ENCODE measurements at regions of chr7 and their contacts with region 1.

Region 1: DNA sequence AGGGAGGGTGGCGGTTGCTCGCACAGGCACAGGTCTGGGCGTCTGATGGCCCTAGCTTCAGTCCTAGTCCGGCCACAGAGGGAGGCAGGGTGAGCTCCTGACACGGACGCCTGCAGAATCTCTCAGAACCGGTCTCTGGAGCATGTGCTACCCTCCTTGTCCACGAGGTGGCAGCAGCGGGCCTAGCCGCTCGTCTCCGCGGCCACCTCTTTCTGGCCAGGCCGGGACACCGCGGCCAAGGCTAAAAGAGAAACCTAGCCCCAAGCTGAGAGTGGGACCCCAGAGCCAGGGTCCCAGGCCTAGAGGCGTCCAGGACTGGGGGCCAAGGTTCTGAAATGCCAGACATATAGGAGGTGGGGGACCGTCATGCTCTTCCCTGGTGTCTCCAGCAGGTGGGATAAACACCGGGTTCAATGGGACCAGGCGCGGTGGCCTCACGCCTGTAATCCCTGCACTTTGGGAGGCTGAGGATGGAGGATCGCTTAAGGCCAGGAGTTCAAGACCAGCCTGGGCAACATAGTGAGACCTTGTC is 3.2 kb upstream of the LAT2 start:
- DNase-seq: peak; percentile 61 to 87 (median 74)
- ATAC-seq: peak; percentile 77
- H3K4me3 ChIP-seq: peak overlapping the region; percentile 30
- H3K4me3 Mint-ChIP-seq: no peak overlapping the region
- H3K27ac ChIP-seq: no peak overlapping the region
- H3K27ac Mint-ChIP-seq: no peak overlapping the region
- H3K4me1 ChIP-seq: peaks cover 34% of the 10 kb centered on the region
- H3K4me1 Mint-ChIP-seq: peaks cover 13% of the 10 kb centered on the region
- H3K27me3 ChIP-seq: no peaks in the 10 kb centered on the region
- H3K27me3 Mint-ChIP-seq: peaks cover 5% of the 10 kb centered on the region
- CTCF ChIP-seq: peak; percentile 96

Region 2: GRCh38 chr7:72307566-72307965 is 1899.1 kb before region 1 on chr7:
- CTCF ChIA-PET with region 1: no interaction called
- POLR2A ChIA-PET with region 1: no interaction called
- intact Hi-C with region 1: no loop called
- DNase-seq: no peak
- ATAC-seq: no peak
- H3K4me3 ChIP-seq: no peak overlapping the region
- H3K4me3 Mint-ChIP-seq: no peak overlapping the region
- H3K27ac ChIP-seq: no peak overlapping the region
- H3K27ac Mint-ChIP-seq: no peak overlapping the region
- H3K4me1 ChIP-seq: no peaks in the 10 kb centered on the region
- H3K4me1 Mint-ChIP-seq: no peaks in the 10 kb centered on the region
- H3K27me3 ChIP-seq: no peaks in the 10 kb centered on the region
- H3K27me3 Mint-ChIP-seq: no peaks in the 10 kb centered on the region
- CTCF ChIP-seq: no peak

Region 3: GRCh38 chr7:74272305-74273038 is 65.8 kb after region 1 on chr7:
- CTCF ChIA-PET with region 1: interaction called, 3 read pairs
- POLR2A ChIA-PET with region 1: no interaction called
- intact Hi-C with region 1: loop called in 1 of 2 experiments (anchors 10 kb)
- DNase-seq: peak in 3 of 14 experiments; percentile 21 to 61 (median 59)
- ATAC-seq: no peak
- H3K4me3 ChIP-seq: no peak overlapping the region
- H3K4me3 Mint-ChIP-seq: peak overlapping the region; percentile 20
- H3K27ac ChIP-seq: no peak overlapping the region
- H3K27ac Mint-ChIP-seq: no peak overlapping the region
- H3K4me1 ChIP-seq: peaks cover 11% of the 10 kb centered on the region
- H3K4me1 Mint-ChIP-seq: peaks cover 8% of the 10 kb centered on the region
- H3K27me3 ChIP-seq: no peaks in the 10 kb centered on the region
- H3K27me3 Mint-ChIP-seq: peaks cover 9% of the 10 kb centered on the region
- CTCF ChIP-seq: no peak

Region 4: DNA sequence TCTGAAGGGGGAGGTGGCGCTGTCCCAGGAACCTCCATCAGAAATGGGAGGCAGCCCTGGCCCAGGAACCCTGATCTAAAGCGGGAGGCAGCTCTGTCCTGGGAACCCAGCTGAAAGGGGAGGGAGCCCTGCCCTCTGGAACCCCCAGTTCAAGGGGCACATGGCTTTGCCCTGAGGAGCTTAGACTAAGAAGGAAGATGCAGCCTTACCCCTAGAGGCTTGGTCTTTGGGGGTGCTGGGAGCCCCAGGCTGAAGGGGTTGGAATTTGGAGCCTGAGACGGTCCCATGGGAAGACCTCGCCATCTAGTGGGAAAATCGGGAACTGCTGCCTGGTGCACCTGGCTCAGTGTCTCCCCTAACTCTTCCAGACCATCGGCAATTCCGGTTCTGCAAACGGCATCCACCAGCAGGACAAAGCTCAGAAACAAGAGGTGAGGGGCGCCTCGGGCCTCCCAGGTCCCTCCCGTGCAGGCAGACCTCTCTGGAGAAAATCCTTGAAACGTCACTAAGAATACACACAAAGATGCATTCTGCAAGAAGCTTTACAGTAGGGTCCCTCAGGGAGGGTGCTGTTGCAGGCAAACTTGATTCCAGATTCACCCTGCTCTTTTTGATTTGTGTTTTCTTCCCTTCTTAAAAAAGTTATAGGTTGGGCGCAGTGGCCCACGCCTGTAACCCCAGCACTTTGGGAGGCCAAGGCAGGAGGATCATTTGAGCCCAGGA is 194.6 kb after region 1 on chr7:
- CTCF ChIA-PET with region 1: interaction called, 38 read pairs
- POLR2A ChIA-PET with region 1: no interaction called
- intact Hi-C with region 1: loop called in 1 of 2 experiments (anchors 1 kb)
- DNase-seq: peak; percentile 56 to 83 (median 66)
- ATAC-seq: peak; percentile 56
- H3K4me3 ChIP-seq: no peak overlapping the region
- H3K4me3 Mint-ChIP-seq: no peak overlapping the region
- H3K27ac ChIP-seq: no peak overlapping the region
- H3K27ac Mint-ChIP-seq: no peak overlapping the region
- H3K4me1 ChIP-seq: peaks cover 4% of the 10 kb centered on the region
- H3K4me1 Mint-ChIP-seq: no peaks in the 10 kb centered on the region
- H3K27me3 ChIP-seq: no peaks in the 10 kb centered on the region
- H3K27me3 Mint-ChIP-seq: no peaks in the 10 kb centered on the region
- CTCF ChIP-seq: peak; percentile 92